B cell (primary cell): ENCODE measurements at regions of chr9 and their contacts with region 1.

Region 1: GRCh38 chr9:129110740-129111527 is at the starts of genes CRAT and PTPA:
- DNase-seq: peak; percentile 96
- ATAC-seq: peak; percentile 88
- H3K4me3 ChIP-seq: peak within 1 kb of the TSS; percentile 92 to 98 (median 95)
- H3K4me3 Mint-ChIP-seq: peak within 1 kb of the TSS; percentile 96
- H3K27ac ChIP-seq: peak within 1 kb of the TSS; percentile 81 to 85
- H3K27ac Mint-ChIP-seq: peak within 1 kb of the TSS; percentile 96
- H3K4me1 ChIP-seq: peaks cover 12 to 19% of the 10 kb centered on the region in 2 donors
- H3K4me1 Mint-ChIP-seq: peaks cover 25% of the 10 kb centered on the region
- H3K27me3 ChIP-seq: no peaks in the 10 kb centered on the region
- H3K27me3 Mint-ChIP-seq: no peaks in the 10 kb centered on the region
- CTCF ChIP-seq: no peak
- total RNA-seq, gene CRAT: 11.8 and 14.1 TPM in 2 replicates
- total RNA-seq, gene PTPA: 72.8 and 73.9 TPM in 2 replicates

Region 2: DNA sequence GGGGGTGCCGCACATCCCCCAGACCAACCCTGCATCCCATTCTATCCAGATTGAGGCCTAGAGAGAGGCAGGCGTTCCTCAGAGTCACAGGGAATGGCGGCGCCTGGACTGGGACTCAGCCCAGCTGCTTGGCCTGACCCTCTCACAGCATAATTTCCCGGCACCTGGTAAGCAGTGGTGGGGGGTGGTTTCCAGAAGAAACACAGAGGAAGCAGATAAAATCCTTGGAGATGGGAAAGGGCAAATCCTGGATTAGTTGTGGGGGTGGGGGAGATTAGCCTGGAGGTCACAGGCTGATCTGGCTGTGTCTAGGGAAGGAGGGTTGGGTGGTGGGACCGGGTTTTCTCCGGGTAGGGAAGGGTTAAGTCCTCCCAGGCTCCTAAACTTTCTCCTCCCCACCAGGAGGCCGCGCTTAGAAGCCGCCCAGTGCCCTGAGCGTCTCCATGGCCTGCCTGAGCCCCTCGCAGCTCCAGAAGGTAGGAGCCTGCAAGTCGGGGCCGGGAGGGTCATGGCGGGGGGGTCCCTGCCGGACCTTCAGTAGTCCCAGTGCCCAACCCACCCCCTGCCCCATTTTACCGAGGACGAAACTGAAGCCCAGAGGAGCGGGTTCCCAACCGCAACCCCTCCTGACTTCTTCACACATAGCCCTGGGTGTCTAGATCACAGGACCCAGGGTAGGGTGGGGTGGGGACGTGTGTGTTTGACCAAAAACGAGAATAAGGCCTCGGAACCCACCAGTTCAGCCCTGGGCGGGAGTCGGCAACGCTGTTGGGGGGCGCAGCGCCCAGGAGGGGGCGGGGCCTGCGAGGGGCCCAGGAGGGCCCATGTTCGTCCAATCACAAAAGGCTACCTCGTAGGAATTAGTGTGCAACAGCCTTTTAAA is 188.8 kb before region 1 on chr9:
- CTCF ChIA-PET with region 1: no interaction called
- POLR2A ChIA-PET with region 1: no interaction called
- intact Hi-C with region 1: no loop called
- DNase-seq: peak; percentile 32
- ATAC-seq: peak; percentile 39
- H3K4me3 ChIP-seq: peak overlapping the region in 4 of 5 experiments; percentile 12 to 44 (median 32)
- H3K4me3 Mint-ChIP-seq: no peak overlapping the region
- H3K27ac ChIP-seq: peak overlapping the region in 1 of 2 donors; percentile 64
- H3K27ac Mint-ChIP-seq: no peak overlapping the region
- H3K4me1 ChIP-seq: peaks cover 13% of the 10 kb centered on the region in 2 donors
- H3K4me1 Mint-ChIP-seq: peaks cover 6% of the 10 kb centered on the region
- H3K27me3 ChIP-seq: peaks cover 0 to 5% (median 0%) of the 10 kb centered on the region in 4 experiments
- H3K27me3 Mint-ChIP-seq: peaks cover 2% of the 10 kb centered on the region
- CTCF ChIP-seq: no peak

Region 3: DNA sequence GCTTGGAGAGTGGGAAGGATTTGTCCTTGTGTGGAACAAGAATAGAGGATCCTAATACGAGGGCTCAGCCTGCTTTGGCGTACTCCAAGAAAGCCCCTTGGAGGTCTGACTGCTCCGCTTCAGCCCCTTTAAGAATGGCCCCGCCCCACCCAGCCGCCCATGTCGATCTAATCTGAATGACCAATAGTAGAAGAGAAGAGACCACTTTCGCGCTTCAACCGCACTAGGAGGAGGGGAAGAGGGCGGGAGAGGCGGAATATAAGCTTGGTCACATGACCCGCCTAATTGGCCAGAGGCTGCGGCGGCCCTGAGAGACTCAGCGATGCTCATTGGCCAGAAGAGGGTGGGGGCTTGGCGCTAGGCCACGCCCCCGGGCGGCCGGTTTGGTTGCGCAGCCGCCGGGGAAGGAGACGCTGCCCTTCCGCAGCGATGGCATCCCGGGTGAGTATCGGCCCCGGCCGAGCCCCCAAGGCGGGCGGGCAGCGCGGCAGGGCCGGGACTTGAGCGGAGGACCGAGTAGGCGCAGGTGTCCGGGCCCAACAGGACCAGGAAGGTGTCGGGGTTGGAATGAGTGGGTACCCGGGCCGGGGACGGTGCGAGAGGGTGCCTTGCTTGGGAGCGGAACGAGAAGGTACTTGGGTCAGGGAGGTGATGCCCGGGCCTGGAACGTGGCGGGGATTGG is 74.6 kb before region 1 on chr9 and contains the start of gene MIGA2:
- CTCF ChIA-PET with region 1: no interaction called
- POLR2A ChIA-PET with region 1: no interaction called
- intact Hi-C with region 1: loop called (anchors 1 kb)
- DNase-seq: peak; percentile 98
- ATAC-seq: peak; percentile 99
- H3K4me3 ChIP-seq: peak within 1 kb of the TSS; percentile 51 to 98 (median 91)
- H3K4me3 Mint-ChIP-seq: peak within 1 kb of the TSS; percentile 97
- H3K27ac ChIP-seq: peak within 1 kb of the TSS; percentile 9 to 82
- H3K27ac Mint-ChIP-seq: peak within 1 kb of the TSS; percentile 85
- H3K4me1 ChIP-seq: peaks cover 19 to 25% of the 10 kb centered on the region in 2 donors
- H3K4me1 Mint-ChIP-seq: peaks cover 34% of the 10 kb centered on the region
- H3K27me3 ChIP-seq: no peaks in the 10 kb centered on the region
- H3K27me3 Mint-ChIP-seq: no peaks in the 10 kb centered on the region
- CTCF ChIP-seq: no peak
- total RNA-seq, gene MIGA2: 71.6 and 78.1 TPM in 2 replicates

Region 4: GRCh38 chr9:129080602-129081387 is 30.1 kb before region 1 on chr9 and contains the start of gene DOLPP1:
- CTCF ChIA-PET with region 1: no interaction called
- POLR2A ChIA-PET with region 1: interaction called, 3 read pairs
- intact Hi-C with region 1: loop called (anchors 1 kb)
- DNase-seq: peak; percentile 99
- ATAC-seq: peak; percentile 92
- H3K4me3 ChIP-seq: peak within 1 kb of the TSS; percentile 67 to 90 (median 75)
- H3K4me3 Mint-ChIP-seq: peak within 1 kb of the TSS; percentile 91
- H3K27ac ChIP-seq: peak within 1 kb of the TSS; percentile 42 to 79
- H3K27ac Mint-ChIP-seq: peak within 1 kb of the TSS; percentile 88
- H3K4me1 ChIP-seq: peaks cover 16 to 20% of the 10 kb centered on the region in 2 donors
- H3K4me1 Mint-ChIP-seq: peaks cover 23% of the 10 kb centered on the region
- H3K27me3 ChIP-seq: no peaks in the 10 kb centered on the region
- H3K27me3 Mint-ChIP-seq: no peaks in the 10 kb centered on the region
- CTCF ChIP-seq: no peak
- total RNA-seq, gene DOLPP1: 4.7 and 7.1 TPM in 2 replicates

Region 5: GRCh38 chr9:129495534-129496325 is 384.8 kb after region 1 on chr9:
- CTCF ChIA-PET with region 1: no interaction called
- POLR2A ChIA-PET with region 1: no interaction called
- intact Hi-C with region 1: loop called (anchors 1 kb)
- DNase-seq: peak; percentile 73
- ATAC-seq: peak; percentile 77
- H3K4me3 ChIP-seq: peak overlapping the region; percentile 46 to 63 (median 56)
- H3K4me3 Mint-ChIP-seq: peak overlapping the region; percentile 82
- H3K27ac ChIP-seq: no peak overlapping the region
- H3K27ac Mint-ChIP-seq: peak overlapping the region; percentile 37
- H3K4me1 ChIP-seq: peaks cover 20 to 21% of the 10 kb centered on the region in 2 donors
- H3K4me1 Mint-ChIP-seq: peaks cover 19% of the 10 kb centered on the region
- H3K27me3 ChIP-seq: peaks cover 0 to 31% (median 11%) of the 10 kb centered on the region in 4 experiments
- H3K27me3 Mint-ChIP-seq: peaks cover 20% of the 10 kb centered on the region
- CTCF ChIP-seq: no peak

Region 6: GRCh38 chr9:129802851-129803675 is 692.1 kb after region 1 on chr9 and contains the start of gene TOR1B:
- CTCF ChIA-PET with region 1: no interaction called
- POLR2A ChIA-PET with region 1: interaction called, 7 read pairs
- intact Hi-C with region 1: loop called (anchors 10 kb)
- DNase-seq: peak; percentile 98
- ATAC-seq: peak; percentile 94
- H3K4me3 ChIP-seq: peak within 1 kb of the TSS; percentile 41 to 96 (median 76)
- H3K4me3 Mint-ChIP-seq: peak within 1 kb of the TSS; percentile 96
- H3K27ac ChIP-seq: peak within 1 kb of the TSS; percentile 71 to 79
- H3K27ac Mint-ChIP-seq: peak within 1 kb of the TSS; percentile 95
- H3K4me1 ChIP-seq: peaks cover 6 to 13% of the 10 kb centered on the region in 2 donors
- H3K4me1 Mint-ChIP-seq: peaks cover 20% of the 10 kb centered on the region
- H3K27me3 ChIP-seq: no peaks in the 10 kb centered on the region
- H3K27me3 Mint-ChIP-seq: no peaks in the 10 kb centered on the region
- CTCF ChIP-seq: no peak
- total RNA-seq, gene TOR1B: 17.4 and 18.9 TPM in 2 replicates